A549 (cell line): ENCODE measurements at regions of chr17 and their contacts with region 1.

Region 1: DNA sequence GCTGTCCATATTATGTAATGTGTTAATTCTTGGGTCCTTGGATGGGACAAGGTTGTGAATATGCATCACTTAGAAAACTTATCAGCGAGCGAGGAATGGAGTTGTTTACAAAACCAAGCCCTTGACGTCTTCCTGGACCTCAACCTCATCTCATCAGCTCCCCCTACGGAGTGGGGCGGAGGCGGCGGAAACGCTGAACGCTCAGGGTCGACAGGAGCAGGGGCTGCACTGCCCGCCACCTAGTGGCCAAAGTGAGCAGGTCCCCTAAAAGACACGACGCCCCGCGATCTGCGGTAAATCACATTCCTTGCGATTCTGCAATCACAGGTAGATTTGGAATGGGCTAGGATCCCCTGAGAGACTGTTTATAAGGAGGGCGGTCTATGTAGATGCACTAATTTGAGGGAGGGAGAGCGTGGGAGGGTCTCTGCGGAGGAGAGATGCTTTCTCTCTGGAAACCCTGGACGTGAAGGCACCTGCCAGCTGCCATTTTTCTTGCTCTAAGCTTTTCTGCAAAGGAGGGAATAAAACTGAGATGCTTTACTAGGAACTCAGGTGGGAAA is 5.4 kb upstream of the ICAM2 start:
- DNase-seq: peak; percentile 81 to 87
- ATAC-seq: peak; percentile 93 to 95
- H3K4me3 ChIP-seq: peak overlapping the region; percentile 35
- H3K27ac ChIP-seq: peak overlapping the region in 1 of 2 experiments; percentile 21; a peak in 1 of 6 replicates
- H3K4me1 ChIP-seq: peaks cover 3% of the 10 kb centered on the region; the same call in 1 of the 3 replicates
- CTCF ChIP-seq: peak; percentile 99
- EP300 ChIP-seq: no peak
- POLR2A ChIP-seq: no peak
- RAD21 ChIP-seq: peak; percentile 77 to 80

Region 2: GRCh38 chr17:63919311-63919723 is 106.5 kb before region 1 on chr17:
- CTCF ChIA-PET with region 1: interaction called, 386 read pairs
- POLR2A ChIA-PET with region 1: no interaction called
- DNase-seq: peak; percentile 67 to 92
- ATAC-seq: peak; percentile 83 to 97
- H3K4me3 ChIP-seq: no peak overlapping the region
- H3K27ac ChIP-seq: no peak overlapping the region
- H3K4me1 ChIP-seq: no peaks in the 10 kb centered on the region; the same call in 2 of the 3 replicates
- CTCF ChIP-seq: peak; percentile 90
- EP300 ChIP-seq: no peak
- POLR2A ChIP-seq: no peak
- RAD21 ChIP-seq: peak; percentile 91 to 95

Region 3: DNA sequence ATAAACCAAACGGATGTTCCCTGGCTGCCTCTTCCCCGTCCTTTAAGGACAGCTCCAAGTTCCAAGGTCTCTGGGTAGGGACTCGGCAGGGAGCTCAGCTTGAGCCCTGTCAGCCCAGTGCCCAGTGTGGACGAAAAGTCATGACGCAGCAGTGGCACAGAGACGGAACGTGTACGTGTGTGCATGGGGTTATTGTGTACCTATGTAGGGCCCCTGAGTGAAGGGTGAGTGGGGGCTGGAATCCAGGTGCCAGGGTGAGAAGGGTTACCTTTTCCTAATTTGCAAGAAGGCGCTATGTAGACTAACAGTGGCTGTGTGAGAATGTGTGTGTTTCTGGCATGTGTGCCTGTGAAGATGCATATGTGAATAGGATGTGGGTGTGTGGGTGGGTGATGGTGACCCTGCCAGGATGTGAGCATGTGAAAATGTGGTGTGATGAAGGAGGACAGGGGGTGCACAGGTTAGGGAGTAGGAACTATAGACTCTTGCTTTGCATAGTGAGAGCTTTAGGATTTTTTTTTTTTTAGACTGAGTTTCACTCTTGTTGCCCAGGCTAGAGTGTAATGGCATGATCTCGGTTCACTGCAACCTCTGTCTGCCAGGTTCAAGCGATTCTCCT is 59.1 kb before region 1 on chr17:
- CTCF ChIA-PET with region 1: interaction called, 17 read pairs
- POLR2A ChIA-PET with region 1: no interaction called
- DNase-seq: no peak
- ATAC-seq: 0 out of 6 replicates have a peak, but pooled peaks of 1 of the 2 experiments have one; percentile 25
- H3K4me3 ChIP-seq: no peak overlapping the region
- H3K27ac ChIP-seq: no peak overlapping the region
- H3K4me1 ChIP-seq: 0 out of 3 replicates have a peak, but pooled peaks cover 2% of the 10 kb centered on the region
- CTCF ChIP-seq: no peak
- EP300 ChIP-seq: no peak
- POLR2A ChIP-seq: no peak
- RAD21 ChIP-seq: no peak

Region 4: GRCh38 chr17:64036198-64036922 is 10.5 kb after region 1 on chr17:
- CTCF ChIA-PET with region 1: interaction called, 206 read pairs
- POLR2A ChIA-PET with region 1: no interaction called
- DNase-seq: peak in 1 of 2 experiments; percentile 46
- ATAC-seq: peak; percentile 86 to 90
- H3K4me3 ChIP-seq: no peak overlapping the region
- H3K27ac ChIP-seq: no peak overlapping the region
- H3K4me1 ChIP-seq: no peaks in the 10 kb centered on the region
- CTCF ChIP-seq: peak; percentile 20; the same call in 1 of the 3 replicates
- EP300 ChIP-seq: no peak
- POLR2A ChIP-seq: no peak
- RAD21 ChIP-seq: peak in 1 of 2 experiments; percentile 13; a peak in 1 of 5 replicates

Region 5: GRCh38 chr17:64081802-64082799 is 56.3 kb after region 1 on chr17:
- CTCF ChIA-PET with region 1: interaction called, 27 read pairs
- POLR2A ChIA-PET with region 1: interaction called, 3 read pairs
- DNase-seq: peak; percentile 79 to 93
- ATAC-seq: peak; percentile 85 to 95
- H3K4me3 ChIP-seq: peak overlapping the region; percentile 2; the same call in 1 of the 3 replicates
- H3K27ac ChIP-seq: peak overlapping the region; percentile 88 to 89
- H3K4me1 ChIP-seq: peaks cover 77% of the 10 kb centered on the region
- CTCF ChIP-seq: no peak
- EP300 ChIP-seq: peak; percentile 87 to 93; a peak in 4 of 5 replicates
- POLR2A ChIP-seq: no peak
- RAD21 ChIP-seq: peak in 1 of 2 experiments; percentile 49; a peak in 3 of 5 replicates

Region 6: DNA sequence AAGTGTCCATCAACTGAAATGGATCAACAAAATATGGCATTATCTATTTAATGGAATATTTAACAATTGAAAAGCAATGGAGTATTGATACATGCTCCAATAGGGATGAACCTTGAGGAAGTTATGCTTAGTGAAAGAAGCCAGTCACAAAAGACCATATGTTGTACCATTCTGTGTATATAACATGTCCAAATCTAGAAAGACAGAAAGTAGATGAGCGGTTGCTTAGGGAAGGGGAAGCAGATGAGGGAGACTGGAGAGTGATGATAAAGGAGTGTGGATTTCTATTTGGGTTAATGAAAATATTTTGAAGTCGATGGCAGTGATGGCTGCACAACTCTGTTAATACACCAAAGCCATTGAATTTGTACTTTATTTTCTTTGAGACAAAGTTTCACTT is 112.6 kb after region 1 on chr17:
- CTCF ChIA-PET with region 1: interaction called, 863 read pairs
- POLR2A ChIA-PET with region 1: interaction called, 19 read pairs
- DNase-seq: no peak
- ATAC-seq: no peak
- H3K4me3 ChIP-seq: no peak overlapping the region
- H3K27ac ChIP-seq: no peak overlapping the region
- H3K4me1 ChIP-seq: no peaks in the 10 kb centered on the region
- CTCF ChIP-seq: no peak
- EP300 ChIP-seq: no peak
- POLR2A ChIP-seq: no peak
- RAD21 ChIP-seq: no peak